ENCODE measurements at regions of chr7 and their contacts with region 1.

Region 1: GRCh38 chr7:56063882-56064625 is at the start of gene SUMF2:
- DNase-seq: peak; percentile 86 to 96 (median 93)
- ATAC-seq: peak; percentile 96
- H3K4me3 ChIP-seq: peak within 1 kb of the TSS; percentile 98
- H3K4me3 Mint-ChIP-seq: peak within 1 kb of the TSS; percentile 83 to 95 (median 92)
- H3K27ac ChIP-seq: peak within 1 kb of the TSS; percentile 88
- H3K27ac Mint-ChIP-seq: peak within 1 kb of the TSS; percentile 93 to 98 (median 96)
- H3K4me1 ChIP-seq: peaks cover 7 to 8% of the 10 kb centered on the region in 2 donors
- H3K4me1 Mint-ChIP-seq: peaks cover 16 to 37% (median 22%) of the 10 kb centered on the region in 7 donors
- H3K27me3 ChIP-seq: no peaks in the 10 kb centered on the region
- H3K27me3 Mint-ChIP-seq: peaks cover 0 to 2% (median 0%) of the 10 kb centered on the region in 5 donors
- total RNA-seq, gene SUMF2: 120 to 176 (median 122) TPM

Region 2: DNA sequence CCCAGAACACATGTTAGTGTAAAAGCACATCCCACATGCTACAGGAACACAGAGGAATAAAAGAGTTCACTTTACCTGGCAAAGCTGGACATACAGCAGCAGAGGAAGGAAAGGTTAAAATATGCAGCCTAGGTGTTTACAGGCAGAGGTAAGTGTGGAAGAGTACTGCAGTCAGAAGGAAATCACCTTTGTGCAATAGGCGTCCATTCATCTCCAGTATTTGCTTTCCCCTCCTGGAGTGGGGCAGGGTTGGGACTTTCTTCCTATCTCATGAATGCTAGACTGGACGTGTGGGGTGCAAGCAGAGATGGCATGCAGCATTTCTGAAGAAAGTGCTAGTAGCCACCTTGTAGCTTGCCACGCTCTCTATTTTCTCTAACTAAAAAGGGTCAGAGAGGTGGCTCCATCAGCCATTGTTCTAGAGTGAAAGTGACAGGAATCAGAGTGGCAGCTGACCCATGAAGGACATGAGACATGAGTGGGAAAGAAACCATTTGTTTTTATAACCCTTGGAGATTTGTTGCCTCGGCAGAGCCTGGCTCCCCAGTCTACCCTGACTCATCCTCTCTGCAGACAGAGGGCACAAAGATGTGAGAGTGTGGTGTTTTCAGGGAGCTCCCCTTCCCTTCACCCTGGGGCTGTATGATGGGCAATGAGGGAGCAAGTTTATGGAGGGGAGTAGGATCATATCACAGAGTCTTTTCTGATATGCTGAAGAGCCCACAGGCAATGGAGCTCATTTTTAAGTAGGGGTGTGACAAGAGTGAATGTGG is 1203.9 kb before region 1 on chr7:
- CTCF ChIA-PET with region 1: no interaction called
- POLR2A ChIA-PET with region 1: no interaction called
- intact Hi-C with region 1: no loop called
- DNase-seq: no peak
- ATAC-seq: no peak
- H3K4me3 ChIP-seq: no peak overlapping the region
- H3K4me3 Mint-ChIP-seq: no peak overlapping the region
- H3K27ac ChIP-seq: no peak overlapping the region
- H3K27ac Mint-ChIP-seq: no peak overlapping the region
- H3K4me1 ChIP-seq: no peaks in the 10 kb centered on the region
- H3K4me1 Mint-ChIP-seq: no peaks in the 10 kb centered on the region
- H3K27me3 ChIP-seq: no peaks in the 10 kb centered on the region
- H3K27me3 Mint-ChIP-seq: peaks cover 0 to 28% (median 16%) of the 10 kb centered on the region in 5 donors

Region 3: GRCh38 chr7:55593515-55594318 is 470.3 kb before region 1 on chr7:
- CTCF ChIA-PET with region 1: no interaction called
- POLR2A ChIA-PET with region 1: no interaction called
- intact Hi-C with region 1: no loop called
- DNase-seq: peak in 7 of 9 donors; percentile 40 to 79 (median 60)
- ATAC-seq: peak; percentile 60
- H3K4me3 ChIP-seq: no peak overlapping the region
- H3K4me3 Mint-ChIP-seq: no peak overlapping the region
- H3K27ac ChIP-seq: no peak overlapping the region
- H3K27ac Mint-ChIP-seq: no peak overlapping the region
- H3K4me1 ChIP-seq: peaks cover 0 to 4% of the 10 kb centered on the region in 2 donors
- H3K4me1 Mint-ChIP-seq: peaks cover 4 to 24% (median 11%) of the 10 kb centered on the region in 7 donors
- H3K27me3 ChIP-seq: no peaks in the 10 kb centered on the region
- H3K27me3 Mint-ChIP-seq: peaks cover 0 to 5% (median 2%) of the 10 kb centered on the region in 5 donors

Region 4: GRCh38 chr7:56033671-56034432 is 30.2 kb before region 1 on chr7:
- CTCF ChIA-PET with region 1: no interaction called
- POLR2A ChIA-PET with region 1: no interaction called
- intact Hi-C with region 1: loop called (anchors 1 to 2 kb)
- DNase-seq: peak; percentile 51 to 81 (median 77)
- ATAC-seq: peak; percentile 98
- H3K4me3 ChIP-seq: peak overlapping the region; percentile 63
- H3K4me3 Mint-ChIP-seq: peak overlapping the region; percentile 78 to 96 (median 88)
- H3K27ac ChIP-seq: peak overlapping the region; percentile 70
- H3K27ac Mint-ChIP-seq: peak overlapping the region; percentile 9 to 90 (median 75)
- H3K4me1 ChIP-seq: no peaks in the 10 kb centered on the region
- H3K4me1 Mint-ChIP-seq: peaks cover 5 to 18% (median 15%) of the 10 kb centered on the region in 7 donors
- H3K27me3 ChIP-seq: no peaks in the 10 kb centered on the region
- H3K27me3 Mint-ChIP-seq: no peaks in the 10 kb centered on the region

Region 5: GRCh38 chr7:56125831-56126230 is 61.8 kb after region 1 on chr7:
- CTCF ChIA-PET with region 1: no interaction called
- POLR2A ChIA-PET with region 1: no interaction called
- intact Hi-C with region 1: no loop called
- DNase-seq: no peak
- ATAC-seq: no peak
- H3K4me3 ChIP-seq: no peak overlapping the region
- H3K4me3 Mint-ChIP-seq: no peak overlapping the region
- H3K27ac ChIP-seq: no peak overlapping the region
- H3K27ac Mint-ChIP-seq: no peak overlapping the region
- H3K4me1 ChIP-seq: no peaks in the 10 kb centered on the region
- H3K4me1 Mint-ChIP-seq: no peaks in the 10 kb centered on the region
- H3K27me3 ChIP-seq: no peaks in the 10 kb centered on the region
- H3K27me3 Mint-ChIP-seq: peaks cover 0 to 4% (median 0%) of the 10 kb centered on the region in 5 donors

Measured in naive thymus-derived CD4-positive, alpha-beta T cell (primary cell).